Lower leg skin (tissue), 4 donors: ENCODE measurements at regions of chr1 and their contacts with region 1.

Region 1: DNA sequence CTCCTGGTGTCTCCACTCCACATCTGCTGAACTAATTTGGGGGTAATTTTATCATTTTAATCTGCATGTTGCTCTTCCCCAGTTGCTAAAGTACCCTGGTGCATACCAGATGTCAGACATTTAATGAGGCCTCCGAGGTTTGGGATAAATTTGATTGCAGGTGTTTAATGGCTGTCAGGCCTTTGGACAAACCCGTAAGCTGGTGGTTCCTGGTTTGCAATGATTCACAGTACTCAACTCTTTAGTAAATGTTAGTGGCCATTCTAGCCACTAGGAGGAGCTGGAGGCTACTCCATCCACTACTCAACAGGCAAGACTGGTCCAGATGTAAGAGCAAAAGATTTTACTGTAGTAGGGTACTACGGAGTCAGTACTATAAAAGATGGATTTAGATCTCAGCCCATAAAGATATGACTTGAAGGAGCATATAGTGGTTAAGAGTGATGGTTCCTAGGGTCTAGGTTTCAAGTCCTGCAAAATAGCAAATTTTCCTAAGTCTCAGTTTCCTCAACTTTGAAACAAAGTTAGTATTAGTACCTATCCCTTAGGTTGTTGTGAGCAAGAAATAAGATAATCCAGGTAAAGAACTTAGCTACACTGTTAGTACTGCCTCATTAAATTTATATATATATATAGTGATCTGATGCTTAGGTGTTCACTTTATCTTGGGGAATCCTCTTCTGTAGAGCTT is 132.8 kb downstream of the SNX7 start:
- DNase-seq: peak in 1 of 2 donors; percentile 31
- H3K4me3 ChIP-seq: no peak overlapping the region
- CTCF ChIP-seq: no peak
- POLR2A ChIP-seq: no peak

Region 2: DNA sequence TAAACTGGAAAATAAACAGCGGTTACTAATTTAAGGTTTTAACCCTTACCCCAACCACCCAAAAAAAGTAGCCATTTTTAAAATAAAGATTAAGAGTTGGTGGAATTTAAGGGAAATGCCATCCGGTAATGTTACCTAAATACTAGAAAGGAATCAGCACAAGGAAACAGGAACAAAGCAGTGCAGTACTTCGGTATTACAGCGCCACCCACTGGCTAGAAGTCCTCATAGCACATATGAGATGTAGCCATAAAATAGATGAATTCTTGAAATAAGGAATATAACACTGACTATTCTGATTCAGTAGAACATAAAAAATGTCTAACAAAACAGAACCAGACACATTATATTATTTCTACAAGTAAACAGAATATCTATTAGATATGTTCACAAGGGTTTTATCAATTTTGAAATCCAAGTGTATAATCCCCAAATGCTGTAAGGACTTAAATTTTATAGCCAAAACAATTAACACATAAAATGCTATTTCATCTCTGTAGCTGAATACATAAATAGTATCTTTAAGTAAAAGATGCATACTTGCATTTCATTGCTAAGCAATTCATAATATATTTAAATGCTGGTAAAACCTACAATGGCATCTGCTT is 913.3 kb after region 1 on chr1:
- intact Hi-C with region 1: loop called (anchors 10 kb)
- DNase-seq: peak; percentile 74 to 92
- H3K4me3 ChIP-seq: no peak overlapping the region
- CTCF ChIP-seq: peak in 1 of 3 donors; percentile 22
- POLR2A ChIP-seq: no peak